ENCODE measurements at regions of chr16 and their contacts with region 1.

Region 1: DNA sequence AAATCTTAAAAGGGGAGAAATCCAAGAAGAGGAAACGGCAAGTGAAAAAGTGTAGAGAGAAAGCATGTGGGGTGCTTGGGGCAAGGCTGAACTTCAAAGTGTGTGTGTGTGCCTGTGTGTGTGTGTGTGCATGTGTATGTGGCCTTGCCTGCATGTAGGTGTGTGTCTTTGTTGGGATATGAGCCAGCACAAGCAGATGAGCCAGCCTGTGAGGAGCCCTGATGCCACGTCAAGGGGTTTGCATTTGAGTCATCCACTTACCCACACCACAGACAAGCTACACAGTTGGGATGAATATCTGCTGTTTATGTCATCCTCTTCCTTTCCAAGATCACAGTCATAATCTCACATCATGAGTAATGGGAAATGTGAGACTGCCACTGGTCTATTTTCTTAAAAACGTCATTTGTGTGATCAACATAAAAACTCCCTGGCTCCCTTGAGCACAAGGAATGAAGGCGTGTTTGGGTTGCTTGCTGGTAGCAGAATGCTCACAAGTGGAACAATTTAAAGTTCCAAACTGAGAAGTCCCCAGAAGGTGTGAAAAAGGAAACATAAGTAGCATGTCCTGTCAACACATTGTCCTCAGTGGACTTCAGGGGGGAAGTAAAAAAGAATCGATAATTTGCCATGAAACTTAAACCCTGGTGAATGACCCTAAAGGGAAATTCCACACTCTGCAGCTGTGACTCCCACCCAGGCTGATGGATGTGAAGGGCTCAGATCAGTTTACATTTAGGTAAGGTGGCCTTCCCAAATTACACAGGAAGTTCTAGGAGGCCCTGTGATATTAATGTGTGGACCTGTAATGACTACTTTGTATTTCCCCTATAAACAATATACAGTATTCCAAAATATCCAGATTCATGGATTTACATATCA is 14.7 kb downstream of the KCTD19 start:
- DNase-seq: peak; percentile 91
- H3K4me3 Mint-ChIP-seq: peak overlapping the region; percentile 41
- H3K27ac Mint-ChIP-seq: peak overlapping the region; percentile 96
- H3K4me1 Mint-ChIP-seq: peaks cover 39% of the 10 kb centered on the region
- H3K27me3 Mint-ChIP-seq: no peaks in the 10 kb centered on the region

Region 2: GRCh38 chr16:66961065-66961744 is 350.6 kb before region 1 on chr16 and contains the start of gene CES3:
- intact Hi-C with region 1: no loop called
- DNase-seq: peak; percentile 92
- H3K4me3 Mint-ChIP-seq: peak within 1 kb of the TSS; percentile 83
- H3K27ac Mint-ChIP-seq: peak within 1 kb of the TSS; percentile 70
- H3K4me1 Mint-ChIP-seq: peaks cover 35% of the 10 kb centered on the region
- H3K27me3 Mint-ChIP-seq: no peaks in the 10 kb centered on the region
- total RNA-seq, gene CES3: 6.8 and 7.0 TPM in 2 replicates

Region 3: DNA sequence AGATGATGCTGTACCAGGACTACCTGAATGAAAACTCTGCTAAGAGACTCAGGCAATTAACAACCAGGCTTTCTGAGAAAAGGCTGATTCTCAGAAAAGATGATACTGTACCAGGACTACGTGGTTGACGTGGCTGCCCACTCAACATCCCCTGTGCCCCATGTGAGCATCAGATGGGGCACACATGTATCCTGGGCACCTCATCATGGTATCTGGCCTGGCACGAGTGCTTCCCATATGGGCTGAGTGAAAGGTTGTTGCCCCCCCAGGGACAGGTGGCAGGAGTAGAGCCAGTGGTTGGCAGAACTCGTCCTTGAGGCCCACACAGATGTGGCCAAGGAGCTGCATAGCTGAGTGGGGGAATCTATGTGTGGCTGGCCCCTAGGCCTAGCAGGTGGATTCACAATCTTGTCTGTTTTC is 326.9 kb before region 1 on chr16:
- intact Hi-C with region 1: loop called (anchors 1 kb)
- DNase-seq: peak; percentile 86
- H3K4me3 Mint-ChIP-seq: peak overlapping the region; percentile 61
- H3K27ac Mint-ChIP-seq: peak overlapping the region; percentile 97
- H3K4me1 Mint-ChIP-seq: peaks cover 57% of the 10 kb centered on the region
- H3K27me3 Mint-ChIP-seq: no peaks in the 10 kb centered on the region

Region 4: GRCh38 chr16:67279296-67280089 is 32.4 kb before region 1 on chr16 and contains the start of gene PLEKHG4:
- intact Hi-C with region 1: loop called (anchors 1 kb)
- DNase-seq: peak; percentile 95
- H3K4me3 Mint-ChIP-seq: peak within 1 kb of the TSS; percentile 89
- H3K27ac Mint-ChIP-seq: peak within 1 kb of the TSS; percentile 90
- H3K4me1 Mint-ChIP-seq: peaks cover 18% of the 10 kb centered on the region
- H3K27me3 Mint-ChIP-seq: no peaks in the 10 kb centered on the region
- total RNA-seq, gene PLEKHG4: 43.4 and 43.8 TPM in 2 replicates

Region 5: DNA sequence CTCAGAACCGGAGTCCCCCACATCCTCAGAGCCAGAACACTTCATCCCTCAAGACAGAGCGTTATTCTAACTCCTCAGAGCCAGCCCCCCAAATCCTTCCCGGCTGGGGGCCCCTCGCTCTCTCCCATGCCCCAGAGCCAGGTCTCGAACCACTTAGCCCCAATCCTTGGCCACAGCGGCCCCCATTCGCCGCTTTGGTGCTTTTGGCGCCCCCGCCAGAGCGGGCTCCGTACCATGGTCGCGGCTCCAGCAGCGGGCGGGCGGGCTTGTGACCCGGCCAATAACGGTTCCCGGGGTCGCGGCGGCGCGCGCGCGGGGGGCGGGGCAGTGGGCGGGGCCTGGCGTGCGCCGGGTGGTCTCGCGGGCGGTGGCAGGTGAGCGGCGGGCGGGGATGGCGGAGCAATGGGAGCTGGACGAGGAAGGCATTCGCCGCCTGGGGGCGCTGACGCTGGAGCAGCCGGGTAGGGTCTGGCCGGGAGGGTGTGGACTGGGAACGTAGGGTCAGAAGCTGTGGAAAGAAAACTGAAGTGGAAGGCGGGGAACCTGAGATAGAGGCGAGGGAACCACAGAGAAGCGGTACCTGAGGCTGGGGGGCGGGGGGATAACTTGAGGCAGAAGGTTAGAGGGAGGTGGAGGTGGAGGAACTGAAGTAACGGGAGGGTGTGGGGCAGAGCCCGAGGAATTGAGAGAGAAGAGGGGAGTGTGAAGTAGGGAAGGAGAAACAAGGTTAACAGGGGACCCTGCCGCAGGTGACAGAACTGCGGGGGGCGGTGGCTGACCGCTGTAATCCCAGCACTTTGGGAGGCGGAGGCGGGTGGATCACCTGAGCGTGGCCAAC is 14.8 kb after region 1 on chr16 and contains the starts of genes KCTD19 and LRRC36:
- intact Hi-C with region 1: loop called (anchors 1 kb)
- DNase-seq: peak; percentile 85
- H3K4me3 Mint-ChIP-seq: peak within 1 kb of the TSS; percentile 82
- H3K27ac Mint-ChIP-seq: peak within 1 kb of the TSS; percentile 73
- H3K4me1 Mint-ChIP-seq: peaks cover 8% of the 10 kb centered on the region
- H3K27me3 Mint-ChIP-seq: peaks cover 43% of the 10 kb centered on the region
- total RNA-seq, gene KCTD19: 1.0 and 1.3 TPM in 2 replicates
- total RNA-seq, gene LRRC36: 0.23 TPM in 1 of 2 replicates, not detected in the other

Region 6: DNA sequence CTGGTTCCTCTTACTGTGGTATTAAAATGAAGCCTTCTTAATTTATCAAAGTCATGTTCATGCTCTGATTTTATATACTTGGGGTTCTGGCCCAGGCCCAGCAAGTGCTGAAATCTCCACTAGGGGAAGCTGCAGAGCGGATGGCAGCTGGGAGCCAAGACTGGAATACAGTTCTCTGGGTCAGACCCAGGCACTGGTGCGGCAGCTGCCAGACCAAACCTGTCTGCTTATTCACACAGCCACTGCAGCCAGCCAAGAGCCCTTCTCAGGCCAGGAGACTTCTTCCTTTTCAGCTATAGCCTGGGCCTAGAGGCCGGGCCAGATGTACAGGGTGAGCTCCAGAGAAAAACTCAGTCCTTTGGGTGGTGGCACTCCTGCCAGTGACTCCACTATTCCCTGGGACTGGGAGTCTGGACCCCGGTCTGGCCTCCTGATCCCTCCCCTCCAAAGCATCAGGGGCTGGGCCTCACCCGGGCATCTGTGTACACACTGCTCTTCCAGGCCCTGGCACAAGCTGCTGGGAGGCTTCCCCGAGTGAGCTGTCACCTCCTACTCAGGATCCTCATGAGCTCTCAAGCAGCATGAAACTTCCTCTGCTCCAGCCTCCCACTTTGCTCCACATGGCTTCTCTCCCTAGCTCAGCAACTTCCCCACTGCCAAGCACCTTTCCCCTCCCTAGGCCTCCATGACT is 144.7 kb after region 1 on chr16:
- intact Hi-C with region 1: no loop called
- DNase-seq: no peak
- H3K4me3 Mint-ChIP-seq: no peak overlapping the region
- H3K27ac Mint-ChIP-seq: no peak overlapping the region
- H3K4me1 Mint-ChIP-seq: peaks cover 4% of the 10 kb centered on the region
- H3K27me3 Mint-ChIP-seq: no peaks in the 10 kb centered on the region